ENCODE measurements at regions of chr19 and their contacts with region 1.

Region 1: GRCh38 chr19:12766051-12766521 is 9.3 kb downstream of the HOOK2 start:
- DNase-seq: peak; percentile 73
- ATAC-seq: peak; percentile 99
- H3K4me3 ChIP-seq: peak overlapping the region; percentile 84
- H3K27ac ChIP-seq: no peak overlapping the region; the same call in 1 of the 2 replicates
- H3K4me1 ChIP-seq: no peaks in the 10 kb centered on the region
- H3K27me3 ChIP-seq: no peaks in the 10 kb centered on the region
- CTCF ChIP-seq: peak; percentile 93
- POLR2A ChIP-seq: no peak
- RAD21 ChIP-seq: peak; percentile 87

Region 2: DNA sequence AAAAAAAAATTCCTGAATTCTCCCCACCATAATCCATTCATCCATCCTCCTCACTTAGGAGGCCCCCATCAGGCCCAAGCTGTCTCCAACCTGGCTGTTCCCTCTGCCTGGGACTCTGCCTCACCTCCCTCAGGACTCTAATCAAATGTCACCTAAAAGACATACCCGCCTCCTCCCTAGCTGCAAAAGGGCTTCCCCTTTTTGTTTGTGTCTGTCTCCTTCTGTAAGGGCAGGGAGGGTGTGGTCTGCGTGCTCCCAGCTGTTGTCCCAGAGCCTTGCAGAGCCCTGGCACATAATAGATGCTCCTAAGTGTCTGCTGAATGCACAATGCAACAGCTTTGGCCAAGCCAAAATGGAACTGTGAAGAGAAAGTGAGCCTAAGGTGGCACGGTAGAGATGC is 36.0 kb before region 1 on chr19:
- CTCF ChIA-PET with region 1: no interaction called
- POLR2A ChIA-PET with region 1: no interaction called
- dilution Hi-C with region 1: no loop called
- in situ Hi-C with region 1: no loop called
- intact Hi-C with region 1: no loop called
- DNase-seq: no peak
- ATAC-seq: no peak
- H3K4me3 ChIP-seq: no peak overlapping the region
- H3K27ac ChIP-seq: no peak overlapping the region
- H3K4me1 ChIP-seq: peaks cover 4% of the 10 kb centered on the region
- H3K27me3 ChIP-seq: no peaks in the 10 kb centered on the region
- CTCF ChIP-seq: no peak
- POLR2A ChIP-seq: no peak
- RAD21 ChIP-seq: no peak

Region 3: GRCh38 chr19:12789904-12790619 is 24.0 kb after region 1 on chr19:
- CTCF ChIA-PET with region 1: interaction called, 30 read pairs
- POLR2A ChIA-PET with region 1: interaction called, 5 read pairs
- dilution Hi-C with region 1: no loop called
- in situ Hi-C with region 1: no loop called
- intact Hi-C with region 1: no loop called
- DNase-seq: peak; percentile 93
- ATAC-seq: peak; percentile 60
- H3K4me3 ChIP-seq: peak overlapping the region; percentile 39
- H3K27ac ChIP-seq: peak overlapping the region; percentile 89
- H3K4me1 ChIP-seq: peaks cover 27% of the 10 kb centered on the region
- H3K27me3 ChIP-seq: no peaks in the 10 kb centered on the region
- CTCF ChIP-seq: no peak
- POLR2A ChIP-seq: peak; percentile 15; the same call in 1 of the 2 replicates
- RAD21 ChIP-seq: no peak

Region 4: GRCh38 chr19:12796146-12797071 is 30.3 kb after region 1 on chr19:
- CTCF ChIA-PET with region 1: interaction called, 30 read pairs
- POLR2A ChIA-PET with region 1: interaction called, 8 read pairs
- dilution Hi-C with region 1: no loop called
- in situ Hi-C with region 1: loop called (anchors 5 kb)
- intact Hi-C with region 1: loop called (anchors 1 kb)
- DNase-seq: peak; percentile 81
- ATAC-seq: peak; percentile 38
- H3K4me3 ChIP-seq: no peak overlapping the region
- H3K27ac ChIP-seq: no peak overlapping the region
- H3K4me1 ChIP-seq: peaks cover 6% of the 10 kb centered on the region
- H3K27me3 ChIP-seq: no peaks in the 10 kb centered on the region
- CTCF ChIP-seq: peak; percentile 98; the same call in 1 of the 2 replicates
- POLR2A ChIP-seq: peak; percentile 76; the same call in 1 of the 2 replicates
- RAD21 ChIP-seq: peak; percentile 99

Region 5: DNA sequence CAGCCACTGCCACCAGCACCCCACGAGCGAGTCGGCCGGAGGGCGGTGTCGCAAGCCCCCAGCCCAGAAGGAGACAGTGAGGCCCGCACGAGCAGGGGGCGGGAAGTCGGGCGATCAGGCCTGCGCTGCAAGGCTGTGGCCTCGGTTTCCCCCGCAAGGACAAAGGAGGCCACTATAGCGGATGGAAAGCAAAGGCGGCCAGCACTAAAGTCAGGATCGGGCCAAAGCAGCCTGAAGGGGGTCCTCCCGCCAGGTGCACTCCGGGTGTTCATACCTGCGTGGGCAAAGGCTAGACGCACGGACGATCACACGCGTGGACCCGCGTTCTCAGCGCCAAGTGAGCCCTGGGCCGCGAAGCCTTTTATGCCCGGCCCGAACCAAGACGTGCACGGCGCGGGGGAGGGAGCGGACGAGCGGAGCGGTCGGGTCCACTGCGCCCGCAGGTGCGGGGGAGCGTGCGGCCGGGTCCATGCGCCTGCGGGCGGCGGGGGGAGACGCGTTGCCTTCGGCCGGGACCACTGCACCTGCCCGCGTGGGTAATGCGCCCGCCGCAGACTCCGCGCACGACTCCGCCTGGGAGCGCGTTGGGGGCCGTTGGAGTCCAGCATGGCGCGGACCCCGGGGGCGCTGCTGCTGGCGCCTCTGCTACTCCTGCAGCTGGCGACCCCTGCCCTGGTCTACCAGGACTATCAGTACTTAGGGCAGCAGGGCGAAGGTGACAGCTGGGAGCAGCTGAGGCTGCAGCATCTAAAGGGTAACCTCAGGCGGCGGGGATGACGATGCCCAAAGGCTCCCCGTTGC is 35.6 kb after region 1 on chr19 and contains the starts of genes PRDX2 and THSD8:
- CTCF ChIA-PET with region 1: interaction called, 30 read pairs
- POLR2A ChIA-PET with region 1: interaction called, 8 read pairs
- dilution Hi-C with region 1: no loop called
- in situ Hi-C with region 1: loop called (anchors 5 kb)
- intact Hi-C with region 1: loop called (anchors 1 kb)
- DNase-seq: peak; percentile 65
- ATAC-seq: peak; percentile 84
- H3K4me3 ChIP-seq: peak within 1 kb of the TSS; percentile 90
- H3K27ac ChIP-seq: peak within 1 kb of the TSS; percentile 78
- H3K4me1 ChIP-seq: peaks cover 6% of the 10 kb centered on the region
- H3K27me3 ChIP-seq: no peaks in the 10 kb centered on the region
- CTCF ChIP-seq: no peak
- POLR2A ChIP-seq: peak; percentile 92
- RAD21 ChIP-seq: no peak
- total RNA-seq, gene PRDX2: 351 and 371 TPM in 2 replicates
- total RNA-seq, gene THSD8: not detected in 2 replicates

Region 6: GRCh38 chr19:12847159-12848139 is 81.4 kb after region 1 on chr19:
- CTCF ChIA-PET with region 1: interaction called, 35 read pairs
- POLR2A ChIA-PET with region 1: interaction called, 10 read pairs
- dilution Hi-C with region 1: no loop called
- in situ Hi-C with region 1: no loop called
- intact Hi-C with region 1: loop called (anchors 2 kb)
- DNase-seq: peak; percentile 73
- ATAC-seq: peak; percentile 100
- H3K4me3 ChIP-seq: peak overlapping the region; percentile 21; the same call in 1 of the 2 replicates
- H3K27ac ChIP-seq: no peak overlapping the region
- H3K4me1 ChIP-seq: peaks cover 3% of the 10 kb centered on the region; the same call in 1 of the 2 replicates
- H3K27me3 ChIP-seq: peaks cover 10% of the 10 kb centered on the region; the same call in 1 of the 2 replicates
- CTCF ChIP-seq: peak; percentile 98
- POLR2A ChIP-seq: no peak
- RAD21 ChIP-seq: peak; percentile 96

Measured in IMR-90 (cell line).